Posterior vena cava (tissue), 2 donors: ENCODE measurements at regions of chr4 and their contacts with region 1.

Region 1: GRCh38 chr4:3640587-3640962 is 108.4 kb upstream of the LRPAP1 start:
- DNase-seq: no peak

Region 2: GRCh38 chr4:3489451-3489962 is 151.1 kb before region 1 on chr4:
- intact Hi-C with region 1: no loop called
- DNase-seq: no peak

Region 3: DNA sequence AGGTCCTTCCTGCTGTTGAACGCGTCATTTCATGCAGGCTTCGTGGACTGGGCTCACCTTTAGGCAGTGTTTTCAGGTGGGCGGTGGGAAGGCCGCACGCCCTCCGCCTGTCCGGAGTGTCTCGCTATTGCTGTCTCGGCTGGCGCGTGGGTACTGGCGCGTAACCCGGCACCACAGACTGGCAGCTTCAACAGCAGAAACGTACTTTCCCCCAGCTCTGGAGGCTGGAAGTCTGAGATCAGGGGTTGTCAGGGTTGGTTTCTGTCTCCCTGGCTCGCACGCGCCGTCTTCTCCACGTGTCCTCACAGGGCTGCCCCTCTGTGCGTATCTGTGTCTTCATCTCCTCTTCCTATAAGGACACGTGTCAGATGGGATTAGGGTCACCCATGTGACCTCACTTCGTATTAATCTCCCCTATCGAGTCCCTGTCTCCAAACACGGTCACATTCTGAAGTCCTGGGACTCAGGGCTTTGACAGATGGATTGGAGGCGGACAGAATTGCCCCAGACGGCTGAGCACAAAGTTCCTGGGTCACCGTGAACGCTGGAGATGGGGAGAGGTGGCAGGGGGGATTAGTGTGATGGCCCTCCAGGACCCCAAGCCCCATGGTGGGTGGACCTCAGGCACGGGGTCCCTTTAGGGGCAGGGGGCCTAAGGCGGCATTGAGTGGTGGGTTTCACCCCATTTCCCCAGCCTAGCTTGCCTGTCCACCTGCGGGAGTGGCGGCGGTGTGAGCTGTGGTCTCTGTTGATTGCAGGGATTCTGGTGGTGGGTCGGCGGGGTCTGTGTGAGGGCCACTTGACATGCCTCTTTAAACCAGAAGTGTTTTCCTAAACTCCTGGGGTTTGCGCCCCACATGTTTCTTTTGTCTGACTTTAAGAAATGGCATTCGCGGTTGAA is 24.9 kb before region 1 on chr4:
- intact Hi-C with region 1: no loop called
- DNase-seq: peak; percentile 75

Region 4: GRCh38 chr4:3800351-3800750 is 159.8 kb after region 1 on chr4:
- intact Hi-C with region 1: loop called in 1 of 2 experiments (anchors 1 kb)
- DNase-seq: no peak